ENCODE measurements at regions of chr16 and their contacts with region 1.

Region 1: GRCh38 chr16:24906199-24907020 is 60.6 kb downstream of the SLC5A11 start:
- ATAC-seq: peak in 3 of 8 experiments; percentile 38 to 61 (median 56)
- H3K4me3 ChIP-seq: no peak overlapping the region
- H3K27ac ChIP-seq: no peak overlapping the region
- H3K4me1 ChIP-seq: no peaks in the 10 kb centered on the region

Region 2: GRCh38 chr16:24635900-24636610 is 270.4 kb before region 1 on chr16:
- in situ Hi-C with region 1: no loop called
- ATAC-seq: peak in 7 of 8 experiments; percentile 41 to 99 (median 92)
- H3K4me3 ChIP-seq: no peak overlapping the region
- H3K27ac ChIP-seq: no peak overlapping the region
- H3K4me1 ChIP-seq: peaks cover 0 to 4% of the 10 kb centered on the region in 2 donors

Region 3: GRCh38 chr16:24858219-24859041 is 48.0 kb before region 1 on chr16:
- in situ Hi-C with region 1: no loop called
- ATAC-seq: peak in 5 of 8 experiments; percentile 51 to 80 (median 55)
- H3K4me3 ChIP-seq: no peak overlapping the region
- H3K27ac ChIP-seq: no peak overlapping the region
- H3K4me1 ChIP-seq: no peaks in the 10 kb centered on the region

Region 4: DNA sequence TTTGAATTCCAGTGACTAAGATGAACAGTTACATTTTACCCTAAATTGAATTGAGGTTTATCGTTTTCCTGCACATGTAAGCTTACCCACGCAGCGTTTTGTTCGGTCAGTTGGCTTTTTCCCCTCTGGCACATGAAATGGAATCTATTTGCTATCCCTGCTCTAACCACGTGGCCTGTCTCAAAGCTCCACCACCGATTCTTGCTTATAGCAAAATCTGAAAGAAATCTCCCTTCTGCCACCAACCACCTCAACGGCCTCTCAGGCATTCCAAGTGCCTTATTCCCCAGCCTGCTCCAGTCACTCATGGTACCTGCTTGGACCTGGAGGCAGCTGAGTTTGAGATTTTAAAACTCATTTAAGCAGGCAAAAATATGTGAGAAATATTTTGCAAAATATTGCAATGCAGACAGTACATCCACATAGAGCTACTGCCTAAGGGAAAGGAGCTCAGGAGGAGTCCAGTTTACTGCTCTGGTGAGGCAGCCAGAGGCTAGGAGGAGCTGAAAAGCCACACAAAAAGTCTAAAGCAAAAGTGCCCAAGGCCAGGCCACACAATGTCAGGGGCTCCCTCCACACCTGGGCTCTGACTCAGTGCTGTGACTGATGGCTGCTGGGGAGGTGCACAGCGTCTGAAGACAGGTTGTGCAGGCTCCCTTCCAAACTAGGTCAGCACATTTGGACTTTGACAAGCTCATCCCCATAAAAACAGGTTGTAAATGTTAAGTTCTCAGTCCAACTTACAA is 82.4 kb after region 1 on chr16:
- in situ Hi-C with region 1: no loop called
- ATAC-seq: peak in 6 of 8 experiments; percentile 24 to 62 (median 40)
- H3K4me3 ChIP-seq: no peak overlapping the region
- H3K27ac ChIP-seq: no peak overlapping the region
- H3K4me1 ChIP-seq: peaks cover 5 to 14% of the 10 kb centered on the region in 2 donors

Region 5: GRCh38 chr16:25014500-25015147 is 108.2 kb after region 1 on chr16:
- in situ Hi-C with region 1: loop called in 1 of 9 experiments (anchors 25 kb)
- ATAC-seq: peak; percentile 11 to 78 (median 76)
- H3K4me3 ChIP-seq: peak overlapping the region; percentile 66 to 89 (median 75)
- H3K27ac ChIP-seq: peak overlapping the region; percentile 83 to 89
- H3K4me1 ChIP-seq: peaks cover 3 to 4% of the 10 kb centered on the region in 2 donors

Region 6: DNA sequence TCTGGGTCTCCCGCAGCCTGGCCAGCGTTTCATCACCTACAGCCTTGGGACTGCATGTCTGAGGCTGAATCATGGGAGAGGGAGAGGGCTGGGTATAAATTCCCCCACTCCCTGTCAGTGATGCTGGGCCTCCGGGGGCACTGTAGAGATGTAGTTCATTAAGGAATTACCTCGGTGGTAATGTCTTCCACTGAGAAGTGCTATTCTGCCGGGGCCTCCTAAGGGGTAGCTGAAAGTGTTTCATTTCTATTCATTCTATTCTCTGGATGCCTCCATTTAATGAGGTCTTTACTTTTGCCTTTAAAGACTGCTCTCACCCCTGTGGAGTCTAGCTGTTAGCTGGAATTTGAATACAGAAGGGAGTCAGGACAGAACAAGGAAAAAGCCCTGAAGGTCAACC is 669.0 kb after region 1 on chr16:
- in situ Hi-C with region 1: no loop called
- ATAC-seq: peak in 5 of 8 experiments; percentile 20 to 83 (median 59)
- H3K4me3 ChIP-seq: no peak overlapping the region
- H3K27ac ChIP-seq: no peak overlapping the region
- H3K4me1 ChIP-seq: peaks cover 0 to 5% of the 10 kb centered on the region in 2 donors

Measured in motor neuron (in vitro differentiated cells).